A549 (cell line): ENCODE measurements at regions of chr12 and their contacts with region 1.

Region 1: DNA sequence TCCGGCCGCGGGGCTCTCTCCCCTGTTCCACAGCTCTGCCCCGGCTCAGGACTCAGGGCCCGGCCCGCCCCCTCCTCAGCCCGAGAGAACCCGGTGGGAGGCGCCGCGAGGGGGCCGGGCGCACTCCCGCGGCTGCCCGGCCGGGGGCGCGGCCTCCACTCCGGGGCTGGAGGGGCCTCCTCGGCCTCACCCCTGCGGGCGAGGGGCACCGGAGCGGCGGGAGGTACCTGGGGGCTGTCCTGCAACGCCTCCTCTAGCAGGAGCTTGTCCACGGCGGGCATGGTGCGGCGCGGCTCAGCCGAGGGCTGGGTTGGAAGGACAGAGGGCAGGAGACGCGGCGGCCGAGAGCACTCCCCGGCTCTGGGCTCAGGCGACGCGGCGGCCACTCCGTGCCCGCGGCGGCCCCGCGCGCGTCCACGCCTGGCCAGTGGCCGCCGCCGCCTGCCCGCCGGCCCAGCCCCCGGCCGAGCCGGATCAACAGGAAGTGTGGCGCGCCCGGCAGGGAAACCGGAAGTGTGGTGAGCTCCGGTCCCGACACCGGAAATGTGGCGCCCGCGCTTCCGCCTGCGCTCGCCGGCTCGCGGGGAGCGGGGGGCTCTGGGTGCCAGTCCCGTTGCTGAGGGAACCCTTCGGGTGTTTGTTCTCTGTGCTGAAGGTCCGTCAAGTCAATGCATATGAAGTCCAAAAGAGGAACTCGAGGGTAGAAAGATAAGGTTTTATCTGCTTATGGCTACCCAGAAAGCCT is at the start of gene APPL2:
- DNase-seq: peak; percentile 91 to 97
- ATAC-seq: peak; percentile 96
- H3K4me3 ChIP-seq: peak within 1 kb of the TSS; percentile 82
- H3K27ac ChIP-seq: peak within 1 kb of the TSS; percentile 88 to 97
- H3K4me1 ChIP-seq: peaks cover 14% of the 10 kb centered on the region; the same call in 2 of the 3 replicates
- CTCF ChIP-seq: peak; percentile 35; the same call in 1 of the 3 replicates
- EP300 ChIP-seq: no peak
- POLR2A ChIP-seq: peak; percentile 82
- RAD21 ChIP-seq: peak in 1 of 2 experiments; percentile 45; a peak in 1 of 5 replicates
- polyA plus RNA-seq, gene APPL2: 48.1 and 62.6 TPM in 2 replicates

Region 2: DNA sequence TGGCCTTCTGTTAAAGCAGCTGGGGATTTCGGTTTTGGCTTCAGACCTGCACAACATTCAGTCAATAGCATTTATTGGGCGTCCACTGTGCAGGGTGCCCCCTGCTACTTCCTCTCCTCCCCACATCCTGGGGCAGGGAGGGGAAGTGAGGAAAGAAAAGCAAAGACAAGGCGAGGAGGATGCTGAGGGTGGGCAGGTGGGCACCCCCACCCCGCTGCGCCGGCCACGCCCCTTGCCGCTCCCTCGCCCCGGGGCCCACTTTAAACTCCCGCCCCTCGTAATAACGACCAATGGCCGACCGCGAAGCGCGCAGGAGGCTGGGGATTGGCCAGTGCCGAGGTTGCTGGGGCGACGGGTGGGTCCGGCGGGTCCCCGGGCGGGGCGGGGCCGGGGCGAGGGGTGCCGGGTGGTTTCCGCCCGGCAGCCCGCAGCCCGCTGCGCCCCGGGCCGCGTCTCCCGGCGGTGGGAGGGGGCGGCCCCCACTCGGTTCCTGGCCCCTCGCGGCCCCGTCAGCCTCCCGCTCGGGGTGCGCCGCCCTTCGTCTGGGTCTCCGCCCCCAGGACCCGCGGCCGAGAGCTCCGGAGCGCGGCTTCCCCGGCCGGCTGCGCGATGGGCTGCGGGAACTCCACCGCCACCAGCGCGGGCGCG is 94.5 kb after region 1 on chr12 and contains the start of gene C12orf75:
- CTCF ChIA-PET with region 1: interaction called, 9 read pairs
- POLR2A ChIA-PET with region 1: interaction called, 17 read pairs
- DNase-seq: peak; percentile 78 to 84
- ATAC-seq: peak; percentile 90 to 95
- H3K4me3 ChIP-seq: peak within 1 kb of the TSS; percentile 64
- H3K27ac ChIP-seq: peak within 1 kb of the TSS; percentile 79 to 93
- H3K4me1 ChIP-seq: peaks cover 54% of the 10 kb centered on the region
- CTCF ChIP-seq: no peak
- EP300 ChIP-seq: no peak
- POLR2A ChIP-seq: peak; percentile 46
- RAD21 ChIP-seq: no peak
- polyA plus RNA-seq, gene C12orf75: 238 and 298 TPM in 2 replicates

Region 3: DNA sequence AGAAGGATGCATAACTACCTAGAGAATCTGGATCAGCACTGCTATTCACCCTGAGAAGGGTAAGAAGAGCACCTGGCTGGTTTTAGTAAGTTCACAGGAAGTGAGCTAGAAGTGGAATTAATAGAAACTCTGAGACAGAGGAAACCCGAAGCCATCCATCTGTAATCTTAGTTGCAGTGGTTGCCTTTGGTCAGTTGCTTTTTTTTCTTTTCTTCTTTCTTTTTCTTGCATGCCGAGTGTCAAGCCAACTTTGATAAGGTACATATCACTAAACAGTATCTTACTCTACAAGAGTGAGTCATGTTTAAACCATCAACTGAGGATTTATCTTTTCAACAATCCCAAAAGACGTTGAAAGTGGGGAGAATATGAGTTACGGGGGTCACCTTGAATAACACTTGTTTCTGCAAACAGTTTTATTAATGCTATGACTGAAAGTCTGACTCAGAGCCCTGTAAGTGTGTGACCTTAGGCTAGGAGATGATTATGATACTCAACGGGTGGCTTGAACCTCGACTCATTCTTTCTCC is 121.3 kb after region 1 on chr12:
- CTCF ChIA-PET with region 1: no interaction called
- POLR2A ChIA-PET with region 1: interaction called, 21 read pairs
- DNase-seq: peak in 1 of 2 experiments; percentile 60
- ATAC-seq: peak; percentile 65 to 78
- H3K4me3 ChIP-seq: 0 out of 3 replicates have a peak overlapping the region, but pooled peaks have one; percentile 3
- H3K27ac ChIP-seq: peak overlapping the region; percentile 67 to 80; a peak in 5 of 6 replicates
- H3K4me1 ChIP-seq: peaks cover 73% of the 10 kb centered on the region
- CTCF ChIP-seq: no peak
- EP300 ChIP-seq: peak in 1 of 2 experiments; percentile 64; a peak in 1 of 5 replicates
- POLR2A ChIP-seq: no peak
- RAD21 ChIP-seq: no peak

Region 4: GRCh38 chr12:105382771-105383622 is 147.1 kb after region 1 on chr12:
- CTCF ChIA-PET with region 1: interaction called, 49 read pairs
- POLR2A ChIA-PET with region 1: interaction called, 8 read pairs
- DNase-seq: peak; percentile 72 to 80
- ATAC-seq: peak; percentile 46 to 76; a peak in 4 of 6 replicates
- H3K4me3 ChIP-seq: peak overlapping the region; percentile 21; the same call in 2 of the 3 replicates
- H3K27ac ChIP-seq: peak overlapping the region; percentile 9 to 75; a peak in 3 of 6 replicates
- H3K4me1 ChIP-seq: peaks cover 5% of the 10 kb centered on the region
- CTCF ChIP-seq: peak; percentile 95
- EP300 ChIP-seq: no peak
- POLR2A ChIP-seq: no peak
- RAD21 ChIP-seq: peak; percentile 95 to 98